ENCODE measurements at regions of chr17 and their contacts with region 1.

Region 1: DNA sequence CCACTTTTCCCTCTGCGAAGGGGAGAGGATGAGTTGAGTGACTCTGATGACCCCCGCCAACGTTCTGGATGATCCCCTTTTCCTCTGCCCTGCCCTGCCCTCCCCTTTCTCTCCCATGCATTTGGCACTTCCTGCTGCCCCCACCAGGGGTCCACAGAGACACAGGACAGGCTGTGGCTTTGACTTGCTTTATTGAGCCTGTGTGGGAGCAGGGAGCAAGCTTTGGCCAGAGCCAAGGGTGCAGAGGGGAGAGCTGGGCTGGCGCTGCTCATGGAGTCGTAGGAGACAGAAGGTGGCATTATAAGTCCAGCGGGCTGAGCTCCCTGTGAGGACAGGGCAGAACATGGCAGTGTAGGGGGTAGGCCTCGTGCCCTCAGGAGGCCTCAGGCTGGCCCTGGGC is 1.6 kb downstream of the PPY start:
- DNase-seq: no peak
- H3K4me3 ChIP-seq: no peak overlapping the region
- H3K27ac ChIP-seq: no peak overlapping the region
- H3K4me1 ChIP-seq: peaks cover 9% of the 10 kb centered on the region
- H3K27me3 ChIP-seq: no peaks in the 10 kb centered on the region
- CTCF ChIP-seq: peak; percentile 40 to 45

Region 2: DNA sequence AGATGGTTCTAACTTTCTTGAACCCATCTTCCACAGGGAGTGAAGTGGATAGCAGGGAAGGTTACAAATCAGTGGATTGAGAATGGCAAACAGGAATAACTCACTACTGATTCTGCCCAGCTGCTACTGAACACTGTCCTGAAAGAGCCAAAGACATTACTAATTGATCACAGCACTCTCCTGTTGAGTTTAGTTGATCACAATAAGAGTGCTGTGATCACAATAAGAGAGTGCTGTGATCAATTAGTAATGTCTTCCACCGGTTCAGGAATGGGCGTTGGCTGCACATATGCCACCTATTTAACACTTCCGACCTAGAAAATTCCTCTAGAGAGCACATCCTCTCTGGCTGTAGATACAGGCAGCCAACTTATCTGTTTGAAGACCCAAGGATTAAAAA is 149.0 kb before region 1 on chr17:
- CTCF ChIA-PET with region 1: no interaction called
- dilution Hi-C with region 1: no loop called
- in situ Hi-C with region 1: no loop called
- intact Hi-C with region 1: loop called (anchors 5 kb)
- DNase-seq: peak; percentile 72
- H3K4me3 ChIP-seq: no peak overlapping the region
- H3K27ac ChIP-seq: no peak overlapping the region
- H3K4me1 ChIP-seq: peaks cover 16% of the 10 kb centered on the region
- H3K27me3 ChIP-seq: no peaks in the 10 kb centered on the region
- CTCF ChIP-seq: no peak

Region 3: GRCh38 chr17:43900183-43900857 is 40.3 kb before region 1 on chr17:
- CTCF ChIA-PET with region 1: no interaction called
- dilution Hi-C with region 1: loop called (anchors 5 kb)
- in situ Hi-C with region 1: no loop called
- intact Hi-C with region 1: no loop called
- DNase-seq: peak; percentile 68
- H3K4me3 ChIP-seq: peak overlapping the region; percentile 1 to 43 (median 12)
- H3K27ac ChIP-seq: no peak overlapping the region
- H3K4me1 ChIP-seq: peaks cover 21% of the 10 kb centered on the region
- H3K27me3 ChIP-seq: no peaks in the 10 kb centered on the region
- CTCF ChIP-seq: no peak

Region 4: DNA sequence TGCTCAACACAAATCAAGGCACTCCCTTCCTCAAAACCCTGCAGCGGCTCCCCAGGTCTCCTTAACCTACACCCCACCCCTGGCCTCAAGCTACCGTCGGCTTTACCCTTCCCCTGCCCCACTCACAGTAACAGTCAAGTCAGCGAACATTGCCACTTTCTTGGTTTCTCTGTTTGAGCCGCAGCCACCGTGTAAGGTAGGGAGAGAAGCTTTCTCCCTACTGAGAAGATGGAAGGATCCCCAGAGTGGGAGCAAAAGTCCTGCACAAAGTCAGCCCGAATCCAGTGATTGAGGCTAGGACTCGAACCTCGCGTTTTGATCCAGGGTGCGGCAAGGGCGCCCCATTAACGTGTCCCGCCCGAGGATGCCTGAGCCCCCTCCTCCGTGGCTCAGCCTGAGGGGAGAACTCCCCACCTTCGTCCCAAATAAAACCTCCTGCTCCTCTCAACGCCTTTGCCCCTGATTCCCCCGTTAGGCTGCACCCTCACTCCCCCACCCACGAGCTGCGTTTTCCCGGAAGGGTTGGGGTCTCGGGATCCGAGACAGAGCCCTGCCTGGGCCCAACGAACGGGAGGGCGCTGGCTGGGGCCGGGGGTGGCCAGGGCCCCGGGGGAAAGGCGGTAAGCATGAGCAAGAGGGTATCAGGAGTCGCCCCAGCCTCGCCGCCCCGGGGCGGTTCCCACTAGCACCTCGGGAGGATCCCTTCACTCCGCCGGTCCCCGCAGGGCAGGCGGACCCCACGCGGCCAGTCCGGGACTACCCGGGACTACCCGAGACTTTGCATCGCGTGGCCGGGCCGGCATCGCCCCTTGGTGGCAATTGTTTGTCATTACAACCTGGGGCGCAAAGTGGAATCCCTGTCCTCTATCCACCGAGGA is 53.9 kb after region 1 on chr17:
- CTCF ChIA-PET with region 1: interaction called, 4 read pairs
- dilution Hi-C with region 1: no loop called
- in situ Hi-C with region 1: loop called (anchors 5 to 10 kb)
- intact Hi-C with region 1: loop called (anchors 1 kb)
- DNase-seq: peak; percentile 28
- H3K4me3 ChIP-seq: peak overlapping the region; percentile 45 to 57 (median 55)
- H3K27ac ChIP-seq: no peak overlapping the region
- H3K4me1 ChIP-seq: peaks cover 9% of the 10 kb centered on the region
- H3K27me3 ChIP-seq: peaks cover 3% of the 10 kb centered on the region
- CTCF ChIP-seq: peak; percentile 65 to 85

Region 5: GRCh38 chr17:44024271-44024663 is 83.6 kb after region 1 on chr17:
- CTCF ChIA-PET with region 1: no interaction called
- dilution Hi-C with region 1: loop called (anchors 5 kb)
- in situ Hi-C with region 1: no loop called
- intact Hi-C with region 1: no loop called
- DNase-seq: no peak
- H3K4me3 ChIP-seq: no peak overlapping the region
- H3K27ac ChIP-seq: no peak overlapping the region
- H3K4me1 ChIP-seq: no peaks in the 10 kb centered on the region
- H3K27me3 ChIP-seq: no peaks in the 10 kb centered on the region
- CTCF ChIP-seq: no peak

Region 6: DNA sequence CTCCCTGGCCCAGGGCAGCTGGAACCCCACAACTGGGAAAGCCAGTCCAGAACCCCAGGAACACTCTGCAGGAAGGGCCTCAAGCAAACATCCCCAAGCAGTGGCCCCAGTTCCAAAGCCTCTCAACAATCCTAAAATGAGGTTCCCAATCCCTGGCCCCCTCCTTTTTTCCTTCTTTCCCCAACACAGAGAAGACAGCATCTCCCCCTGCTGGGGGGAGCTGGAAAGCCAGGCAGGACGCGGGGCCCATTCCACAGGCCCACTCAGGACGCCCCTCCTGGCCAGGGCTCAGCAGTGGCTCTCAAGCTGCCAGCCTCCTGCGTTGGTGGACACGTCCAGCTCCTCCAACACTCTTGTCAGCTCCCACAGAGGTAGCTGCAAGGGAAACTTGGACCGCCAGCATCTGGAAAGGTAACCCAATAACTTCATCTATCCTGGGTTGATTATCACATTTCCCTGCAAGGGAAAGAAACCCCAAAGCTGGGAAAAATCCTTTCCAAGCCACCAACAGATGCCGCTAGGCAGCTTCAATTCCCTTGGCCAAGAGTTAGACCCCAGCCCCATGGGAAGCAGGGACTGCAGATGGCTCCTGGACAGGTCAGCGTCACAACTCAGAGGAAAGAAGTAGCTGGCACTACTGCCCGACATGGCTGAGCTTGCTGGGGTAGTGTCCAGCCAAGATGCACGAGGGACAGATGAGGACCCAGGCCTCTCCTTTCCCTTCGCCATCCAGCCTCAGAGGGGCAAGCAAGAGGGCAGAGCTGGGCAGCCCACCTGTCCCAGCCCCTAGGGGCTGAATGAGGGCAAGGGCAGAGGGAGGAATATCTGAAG is 175.2 kb after region 1 on chr17:
- CTCF ChIA-PET with region 1: no interaction called
- dilution Hi-C with region 1: no loop called
- in situ Hi-C with region 1: no loop called
- intact Hi-C with region 1: loop called (anchors 5 kb)
- DNase-seq: no peak
- H3K4me3 ChIP-seq: no peak overlapping the region
- H3K27ac ChIP-seq: no peak overlapping the region
- H3K4me1 ChIP-seq: peaks cover 14% of the 10 kb centered on the region
- H3K27me3 ChIP-seq: no peaks in the 10 kb centered on the region
- CTCF ChIP-seq: peak; percentile 70 to 78